Naive thymus-derived CD4-positive, alpha-beta T cell (primary cell): ENCODE measurements at regions of chr9 and their contacts with region 1.

Region 1: GRCh38 chr9:31119882-31120454 is 1264.5 kb upstream of the ACO1 start:
- DNase-seq: peak in 8 of 9 donors; percentile 7 to 70 (median 60)
- ATAC-seq: peak; percentile 76
- H3K4me3 ChIP-seq: no peak overlapping the region
- H3K4me3 Mint-ChIP-seq: no peak overlapping the region
- H3K27ac ChIP-seq: no peak overlapping the region
- H3K27ac Mint-ChIP-seq: peak overlapping the region in 3 of 9 donors; percentile 9 to 34 (median 23)
- H3K4me1 ChIP-seq: no peaks in the 10 kb centered on the region
- H3K4me1 Mint-ChIP-seq: peaks cover 0 to 8% (median 6%) of the 10 kb centered on the region in 7 donors
- H3K27me3 ChIP-seq: no peaks in the 10 kb centered on the region
- H3K27me3 Mint-ChIP-seq: peaks cover 0 to 6% (median 0%) of the 10 kb centered on the region in 5 donors

Region 2: GRCh38 chr9:31013371-31013770 is 106.6 kb before region 1 on chr9:
- CTCF ChIA-PET with region 1: no interaction called
- POLR2A ChIA-PET with region 1: no interaction called
- intact Hi-C with region 1: no loop called
- DNase-seq: no peak
- ATAC-seq: no peak
- H3K4me3 ChIP-seq: no peak overlapping the region
- H3K4me3 Mint-ChIP-seq: no peak overlapping the region
- H3K27ac ChIP-seq: no peak overlapping the region
- H3K27ac Mint-ChIP-seq: no peak overlapping the region
- H3K4me1 ChIP-seq: no peaks in the 10 kb centered on the region
- H3K4me1 Mint-ChIP-seq: no peaks in the 10 kb centered on the region
- H3K27me3 ChIP-seq: no peaks in the 10 kb centered on the region
- H3K27me3 Mint-ChIP-seq: no peaks in the 10 kb centered on the region

Region 3: GRCh38 chr9:31304576-31304975 is 184.6 kb after region 1 on chr9:
- CTCF ChIA-PET with region 1: interaction called, 16 read pairs
- POLR2A ChIA-PET with region 1: interaction called, 3 read pairs
- intact Hi-C with region 1: loop called (anchors 1 kb)
- DNase-seq: no peak
- ATAC-seq: no peak
- H3K4me3 ChIP-seq: no peak overlapping the region
- H3K4me3 Mint-ChIP-seq: no peak overlapping the region
- H3K27ac ChIP-seq: no peak overlapping the region
- H3K27ac Mint-ChIP-seq: no peak overlapping the region
- H3K4me1 ChIP-seq: peaks cover 6 to 10% of the 10 kb centered on the region in 2 donors
- H3K4me1 Mint-ChIP-seq: peaks cover 8 to 40% (median 34%) of the 10 kb centered on the region in 7 donors
- H3K27me3 ChIP-seq: no peaks in the 10 kb centered on the region
- H3K27me3 Mint-ChIP-seq: no peaks in the 10 kb centered on the region

Region 4: DNA sequence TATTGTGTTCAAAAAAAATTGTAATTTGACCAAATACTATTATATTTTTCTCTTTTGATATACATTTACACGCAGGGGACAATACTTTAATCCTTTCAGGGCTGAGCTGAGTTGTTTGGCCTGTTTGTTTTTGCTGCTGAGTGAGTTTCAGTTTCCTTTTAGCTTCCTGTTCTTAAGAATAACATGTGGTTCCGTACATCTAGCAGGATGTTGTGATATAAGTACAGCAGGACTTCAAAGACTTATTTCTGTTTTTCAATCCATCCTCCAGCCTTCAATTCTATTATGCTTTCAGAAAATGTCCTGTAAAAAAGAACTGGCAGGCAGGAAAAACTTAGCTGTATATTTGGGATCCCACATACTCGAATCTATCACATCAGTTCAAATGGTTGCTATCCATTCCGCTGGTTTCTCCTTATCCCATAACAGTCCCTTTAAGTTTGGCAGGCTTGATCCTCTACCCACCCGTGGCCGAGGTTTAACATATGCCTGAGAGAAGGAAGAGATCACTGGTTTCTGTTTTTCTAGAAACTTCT is 227.2 kb after region 1 on chr9:
- CTCF ChIA-PET with region 1: no interaction called
- POLR2A ChIA-PET with region 1: no interaction called
- intact Hi-C with region 1: loop called in 1 of 2 experiments (anchors 1 kb)
- DNase-seq: peak in 7 of 9 donors; percentile 58 to 81 (median 72)
- ATAC-seq: peak; percentile 97
- H3K4me3 ChIP-seq: peak overlapping the region; percentile 36
- H3K4me3 Mint-ChIP-seq: peak overlapping the region; percentile 63 to 82 (median 72)
- H3K27ac ChIP-seq: peak overlapping the region; percentile 77
- H3K27ac Mint-ChIP-seq: peak overlapping the region; percentile 93 to 98 (median 96)
- H3K4me1 ChIP-seq: peaks cover 25 to 26% of the 10 kb centered on the region in 2 donors
- H3K4me1 Mint-ChIP-seq: peaks cover 8 to 73% (median 58%) of the 10 kb centered on the region in 7 donors
- H3K27me3 ChIP-seq: no peaks in the 10 kb centered on the region
- H3K27me3 Mint-ChIP-seq: no peaks in the 10 kb centered on the region

Region 5: DNA sequence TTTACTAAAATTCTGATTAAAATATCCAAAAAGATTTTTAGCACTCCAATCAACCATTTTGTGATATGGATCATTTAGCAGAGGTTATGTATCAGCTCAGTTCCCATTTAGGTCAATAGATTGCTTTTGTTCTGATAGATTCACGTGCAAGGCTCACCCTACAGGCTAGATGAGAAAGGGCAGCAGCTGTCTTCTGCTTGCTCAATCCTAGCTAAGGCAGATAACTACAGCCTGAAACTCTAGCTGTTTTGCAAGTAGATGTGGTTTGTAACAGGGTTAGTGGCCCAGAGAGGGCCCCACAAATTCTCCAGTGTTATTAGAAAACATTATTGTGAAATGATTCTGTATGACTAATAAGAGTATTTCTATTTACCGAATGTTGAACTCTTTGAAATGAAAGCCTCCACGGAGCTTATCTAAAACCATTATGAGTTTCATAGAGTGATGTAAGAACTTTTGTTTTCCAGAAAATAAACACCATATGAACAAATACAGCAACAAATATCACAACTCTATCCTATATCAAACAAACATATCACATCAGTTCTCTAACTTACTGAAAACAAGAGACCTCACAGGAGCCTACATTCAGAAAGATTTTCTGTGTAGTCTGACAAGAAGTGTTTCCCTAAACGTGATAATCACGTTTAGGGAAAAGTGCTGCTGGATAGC is 422.6 kb after region 1 on chr9:
- CTCF ChIA-PET with region 1: interaction called, 7 read pairs
- POLR2A ChIA-PET with region 1: no interaction called
- intact Hi-C with region 1: loop called (anchors 1 to 5 kb)
- DNase-seq: peak in 5 of 9 donors; percentile 3 to 25 (median 18)
- ATAC-seq: peak; percentile 79
- H3K4me3 ChIP-seq: no peak overlapping the region
- H3K4me3 Mint-ChIP-seq: no peak overlapping the region
- H3K27ac ChIP-seq: no peak overlapping the region
- H3K27ac Mint-ChIP-seq: peak overlapping the region in 1 of 9 donors; percentile 1
- H3K4me1 ChIP-seq: peaks cover 0 to 6% of the 10 kb centered on the region in 2 donors
- H3K4me1 Mint-ChIP-seq: peaks cover 0 to 14% (median 6%) of the 10 kb centered on the region in 7 donors
- H3K27me3 ChIP-seq: no peaks in the 10 kb centered on the region
- H3K27me3 Mint-ChIP-seq: no peaks in the 10 kb centered on the region

Region 6: GRCh38 chr9:32069169-32069813 is 949.3 kb after region 1 on chr9:
- CTCF ChIA-PET with region 1: no interaction called
- POLR2A ChIA-PET with region 1: no interaction called
- intact Hi-C with region 1: loop called in 1 of 2 experiments (anchors 1 kb)
- DNase-seq: no peak
- ATAC-seq: no peak
- H3K4me3 ChIP-seq: no peak overlapping the region
- H3K4me3 Mint-ChIP-seq: no peak overlapping the region
- H3K27ac ChIP-seq: no peak overlapping the region
- H3K27ac Mint-ChIP-seq: no peak overlapping the region
- H3K4me1 ChIP-seq: no peaks in the 10 kb centered on the region
- H3K4me1 Mint-ChIP-seq: no peaks in the 10 kb centered on the region
- H3K27me3 ChIP-seq: no peaks in the 10 kb centered on the region
- H3K27me3 Mint-ChIP-seq: peaks cover 0 to 4% (median 0%) of the 10 kb centered on the region in 5 donors